Panc1 (cell line): ENCODE measurements at regions of chr10 and their contacts with region 1.

Region 1: GRCh38 chr10:102729029-102730026 is 14.4 kb upstream of the WBP1L start:
- DNase-seq: peak; percentile 35
- ATAC-seq: peak; percentile 98
- H3K4me3 ChIP-seq: no peak overlapping the region
- H3K27ac ChIP-seq: peak overlapping the region; percentile 58
- H3K4me1 ChIP-seq: peaks cover 3% of the 10 kb centered on the region; the same call in 1 of the 2 replicates
- H3K27me3 ChIP-seq: no peaks in the 10 kb centered on the region
- CTCF ChIP-seq: peak; percentile 98

Region 2: GRCh38 chr10:102743588-102744373 is 14.5 kb after region 1 on chr10 and contains the start of gene WBP1L:
- CTCF ChIA-PET with region 1: no interaction called
- POLR2A ChIA-PET with region 1: interaction called, 15 read pairs
- in situ Hi-C with region 1: no loop called
- intact Hi-C with region 1: no loop called
- DNase-seq: peak; percentile 100
- ATAC-seq: peak; percentile 96
- H3K4me3 ChIP-seq: peak within 1 kb of the TSS; percentile 79 to 92
- H3K27ac ChIP-seq: peak within 1 kb of the TSS; percentile 95
- H3K4me1 ChIP-seq: peaks cover 24% of the 10 kb centered on the region
- H3K27me3 ChIP-seq: no peaks in the 10 kb centered on the region
- CTCF ChIP-seq: no peak
- total RNA-seq, gene WBP1L: 91.3 TPM

Region 3: GRCh38 chr10:102835007-102835482 is 105.7 kb after region 1 on chr10:
- CTCF ChIA-PET with region 1: no interaction called
- POLR2A ChIA-PET with region 1: no interaction called
- in situ Hi-C with region 1: no loop called
- intact Hi-C with region 1: loop called (anchors 5 kb)
- DNase-seq: peak; percentile 74
- ATAC-seq: peak; percentile 99
- H3K4me3 ChIP-seq: no peak overlapping the region
- H3K27ac ChIP-seq: no peak overlapping the region; the same call in 1 of the 2 replicates
- H3K4me1 ChIP-seq: 0 out of 2 replicates have a peak, but pooled peaks cover 4% of the 10 kb centered on the region
- H3K27me3 ChIP-seq: no peaks in the 10 kb centered on the region
- CTCF ChIP-seq: peak; percentile 93

Region 4: GRCh38 chr10:102904346-102904745 is 175.0 kb after region 1 on chr10:
- CTCF ChIA-PET with region 1: no interaction called
- POLR2A ChIA-PET with region 1: no interaction called
- in situ Hi-C with region 1: no loop called
- intact Hi-C with region 1: loop called (anchors 2 kb)
- DNase-seq: no peak
- ATAC-seq: no peak
- H3K4me3 ChIP-seq: no peak overlapping the region
- H3K27ac ChIP-seq: no peak overlapping the region
- H3K4me1 ChIP-seq: no peaks in the 10 kb centered on the region
- H3K27me3 ChIP-seq: no peaks in the 10 kb centered on the region
- CTCF ChIP-seq: no peak

Region 5: DNA sequence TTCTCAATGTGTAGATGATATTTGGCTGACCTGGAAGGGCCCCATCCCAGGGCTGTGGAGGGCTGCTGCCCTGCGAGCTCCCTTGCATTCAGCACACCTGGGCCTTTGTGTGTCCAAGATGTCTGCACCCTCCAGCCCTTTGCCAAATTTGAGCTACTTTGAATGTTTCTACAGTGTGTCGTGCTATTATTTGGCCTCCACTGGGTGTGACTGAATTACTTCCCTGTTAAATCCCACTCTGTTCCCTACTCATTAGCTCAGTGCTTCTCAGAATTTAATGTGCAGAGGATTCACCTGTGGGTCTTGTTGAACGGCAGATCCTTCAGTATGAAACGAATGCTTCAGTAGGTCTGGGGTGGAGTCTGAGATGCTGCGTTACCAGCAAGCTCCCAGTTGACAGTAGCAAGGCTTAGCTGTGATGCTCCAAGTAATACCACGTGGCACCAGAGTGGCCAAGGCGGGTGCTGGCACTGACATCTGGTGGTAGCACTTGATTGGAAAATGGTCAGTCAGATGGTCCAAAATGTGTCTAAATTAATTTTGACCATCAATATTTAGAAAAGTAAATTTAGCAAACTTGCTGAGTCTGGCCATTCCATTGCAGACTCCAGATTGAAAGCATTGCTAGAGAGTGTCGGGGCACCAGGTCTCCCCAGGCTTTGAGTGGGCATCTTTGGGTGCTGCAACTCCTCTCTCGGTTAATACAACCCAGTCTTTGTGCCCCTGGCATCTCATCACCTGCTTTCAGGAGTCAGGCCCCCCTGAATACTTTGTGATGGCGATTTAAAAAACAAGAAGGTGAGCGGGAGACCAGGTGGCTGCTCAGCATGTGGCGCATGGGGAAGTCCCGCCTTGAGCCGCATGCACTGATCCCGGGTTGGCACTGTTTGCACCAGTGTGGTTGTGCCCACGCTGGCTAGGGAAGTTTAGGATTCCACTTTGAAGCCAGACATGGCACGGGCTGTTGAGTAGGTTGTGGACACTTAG is 333.6 kb after region 1 on chr10:
- CTCF ChIA-PET with region 1: no interaction called
- POLR2A ChIA-PET with region 1: no interaction called
- in situ Hi-C with region 1: no loop called
- intact Hi-C with region 1: loop called (anchors 5 kb)
- DNase-seq: no peak
- ATAC-seq: peak; percentile 83
- H3K4me3 ChIP-seq: no peak overlapping the region
- H3K27ac ChIP-seq: no peak overlapping the region
- H3K4me1 ChIP-seq: no peaks in the 10 kb centered on the region
- H3K27me3 ChIP-seq: no peaks in the 10 kb centered on the region
- CTCF ChIP-seq: peak; percentile 57